Gastrocnemius medialis (tissue), 4 donors: ENCODE measurements at regions of chr13 and their contacts with region 1.

Region 1: DNA sequence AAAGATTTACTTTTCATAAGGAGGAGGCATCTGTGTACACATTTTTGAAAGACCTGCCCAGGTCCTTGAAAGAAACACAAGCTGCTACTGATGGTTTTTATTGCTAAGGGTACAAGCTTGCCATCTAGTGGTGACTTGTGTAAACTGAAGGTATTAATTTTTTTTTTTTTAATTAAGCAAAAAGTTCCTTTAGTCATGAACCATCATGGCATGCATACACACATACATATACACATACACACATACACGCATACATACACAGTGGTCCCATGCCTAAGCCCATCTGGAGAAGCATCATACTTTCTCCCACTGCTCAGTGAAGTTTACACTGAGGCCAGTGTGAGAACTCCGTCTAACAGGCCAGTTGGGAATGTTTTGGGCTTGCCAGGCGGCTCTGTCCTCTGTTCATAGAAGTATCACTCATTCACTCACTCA is 312.5 kb downstream of the DCLK1 start:
- DNase-seq: no peak
- ATAC-seq: peak; percentile 53 to 60
- H3K4me3 ChIP-seq: no peak overlapping the region
- H3K27ac ChIP-seq: no peak overlapping the region
- H3K4me1 ChIP-seq: no peaks in the 10 kb centered on the region
- H3K27me3 ChIP-seq: no peaks in the 10 kb centered on the region
- CTCF ChIP-seq: peak in 4 of 5 experiments; percentile 30 to 59 (median 52)
- POLR2A ChIP-seq: no peak

Region 2: DNA sequence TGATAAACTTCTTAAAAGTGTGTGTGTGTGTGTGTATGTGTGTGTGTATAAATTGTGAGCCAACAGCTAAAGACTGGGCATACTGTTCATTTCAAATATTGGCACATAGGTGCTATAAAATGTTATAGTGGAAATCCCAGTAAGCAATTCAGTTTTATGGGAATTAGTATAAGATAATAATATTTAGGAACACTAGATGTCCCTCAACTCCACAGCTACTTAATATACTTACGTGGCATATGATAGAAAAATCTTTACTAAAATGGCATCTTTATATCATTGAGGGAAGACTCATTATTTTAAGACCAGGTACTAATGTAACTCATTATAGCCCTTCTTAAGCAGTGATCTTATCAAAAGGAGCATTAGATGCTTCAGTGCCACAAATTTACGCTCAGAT is 608.4 kb before region 1 on chr13:
- in situ Hi-C with region 1: loop called in 1 of 4 experiments (anchors 25 kb)
- intact Hi-C with region 1: no loop called
- DNase-seq: no peak
- ATAC-seq: no peak
- H3K4me3 ChIP-seq: no peak overlapping the region
- H3K27ac ChIP-seq: no peak overlapping the region
- H3K4me1 ChIP-seq: no peaks in the 10 kb centered on the region
- H3K27me3 ChIP-seq: no peaks in the 10 kb centered on the region
- CTCF ChIP-seq: peak in 1 of 5 experiments; percentile 7
- POLR2A ChIP-seq: no peak

Region 3: GRCh38 chr13:35703061-35703460 is 115.6 kb before region 1 on chr13:
- in situ Hi-C with region 1: no loop called
- intact Hi-C with region 1: no loop called
- DNase-seq: no peak
- ATAC-seq: no peak
- H3K4me3 ChIP-seq: no peak overlapping the region
- H3K27ac ChIP-seq: no peak overlapping the region
- H3K4me1 ChIP-seq: peaks cover 3 to 7% of the 10 kb centered on the region in 2 donors
- H3K27me3 ChIP-seq: peaks cover 0 to 5% (median 4%) of the 10 kb centered on the region in 3 donors
- CTCF ChIP-seq: no peak
- POLR2A ChIP-seq: no peak

Region 4: DNA sequence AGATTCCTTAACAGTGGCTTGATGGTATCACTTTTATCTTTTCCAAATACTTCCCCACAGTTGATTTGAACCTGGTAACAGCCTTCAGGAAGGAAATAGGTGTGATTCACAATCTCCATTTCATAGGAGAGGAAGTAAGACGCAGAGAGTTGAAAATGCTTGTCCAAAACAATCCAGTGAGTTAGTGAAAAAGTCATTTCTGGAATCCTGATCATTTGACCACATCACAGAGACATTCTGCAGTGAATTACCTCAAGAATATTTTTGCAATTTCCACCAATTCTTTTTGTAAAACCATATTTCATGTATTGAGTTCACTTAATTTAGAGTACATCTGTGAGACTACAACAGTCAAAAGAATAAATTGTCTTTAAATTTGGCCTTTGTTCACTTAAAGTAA is 19.7 kb after region 1 on chr13:
- in situ Hi-C with region 1: no loop called
- intact Hi-C with region 1: no loop called
- DNase-seq: no peak
- ATAC-seq: no peak
- H3K4me3 ChIP-seq: no peak overlapping the region
- H3K27ac ChIP-seq: peak overlapping the region in 1 of 4 donors; percentile 52
- H3K4me1 ChIP-seq: peaks cover 2 to 12% of the 10 kb centered on the region in 2 donors
- H3K27me3 ChIP-seq: no peaks in the 10 kb centered on the region
- CTCF ChIP-seq: no peak
- POLR2A ChIP-seq: no peak